H1 (cell line): ENCODE measurements at regions of chr6 and their contacts with region 1.

Region 1: DNA sequence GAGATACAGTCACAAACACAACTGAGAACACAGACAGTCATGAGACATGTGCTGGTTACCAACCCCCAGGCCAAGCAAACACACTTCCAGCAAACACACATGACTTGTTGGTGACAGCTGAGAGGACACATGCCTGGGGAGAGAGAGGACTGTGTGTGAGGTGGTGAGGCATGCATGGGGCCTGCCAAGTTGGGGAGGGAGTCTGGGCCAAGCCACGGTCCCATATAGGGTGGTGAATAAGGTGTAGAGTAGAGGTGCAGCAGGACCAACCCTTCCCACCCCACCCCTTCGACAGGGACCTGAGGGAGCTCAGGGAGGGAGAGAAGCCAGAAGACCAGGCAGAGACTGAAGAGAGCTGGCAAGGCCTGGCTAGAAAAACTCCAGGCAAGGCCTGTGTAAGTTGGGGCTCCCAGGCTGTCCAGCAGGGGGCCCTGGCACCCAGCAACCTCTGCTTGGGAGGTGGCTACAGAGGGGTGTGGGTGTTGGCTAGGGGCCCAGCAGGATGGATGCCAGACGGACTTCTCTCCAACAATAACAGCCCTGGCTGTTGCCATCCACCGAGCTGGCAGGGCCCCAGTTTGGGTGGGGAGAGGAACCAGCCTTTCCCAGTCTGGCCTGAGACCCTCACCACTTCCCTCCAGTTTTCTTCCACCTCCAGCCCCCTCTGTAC is 2.0 kb upstream of the SLC29A1 start:
- DNase-seq: peak in 1 of 2 experiments; percentile 74
- H3K4me3 ChIP-seq: no peak overlapping the region; a peak in 1 of 8 replicates
- H3K27ac ChIP-seq: no peak overlapping the region
- H3K4me1 ChIP-seq: peaks cover 33 to 61% (median 45%) of the 10 kb centered on the region in 4 experiments
- H3K27me3 ChIP-seq: no peaks in the 10 kb centered on the region
- CTCF ChIP-seq: peak in 2 of 3 experiments; percentile 67 to 71; a peak in 3 of 4 replicates
- EP300 ChIP-seq: no peak
- POLR2A ChIP-seq: no peak
- RAD21 ChIP-seq: peak; percentile 28 to 60

Region 2: DNA sequence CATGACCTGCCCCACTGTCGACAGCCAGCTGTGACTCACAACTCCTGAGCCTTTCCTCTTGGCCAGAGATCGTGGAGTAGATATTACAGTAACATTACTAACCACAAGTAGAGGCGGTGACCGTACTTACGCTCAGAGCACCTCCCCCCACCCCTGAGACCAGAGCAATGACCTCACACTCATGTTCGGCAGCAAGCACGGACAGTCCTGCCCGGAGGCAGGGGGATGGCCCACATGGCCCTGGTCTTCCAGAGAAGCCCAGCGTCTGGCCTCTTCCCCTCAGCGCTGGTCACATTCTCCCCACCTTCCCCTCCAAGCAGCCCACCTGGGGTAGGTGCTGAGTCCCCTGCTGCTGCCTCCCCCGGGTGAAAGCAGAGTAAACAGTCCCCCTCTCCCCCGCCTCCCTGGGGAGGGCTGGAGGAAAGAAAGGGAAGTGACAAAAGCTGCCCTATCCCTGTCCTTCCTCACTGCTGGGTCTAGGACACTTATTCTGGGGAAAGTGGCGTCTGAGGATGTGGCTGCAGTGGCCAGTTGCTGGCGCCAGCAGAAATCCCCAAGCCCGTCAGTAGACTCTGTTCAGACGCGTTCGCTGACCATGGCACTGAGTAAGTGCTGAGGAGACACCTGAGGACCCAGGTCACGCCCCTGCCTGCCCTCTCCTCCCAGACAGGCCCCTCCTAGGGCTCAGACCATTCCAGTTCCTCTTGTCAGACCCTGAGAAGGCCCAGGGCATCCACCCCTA is 162.6 kb before region 1 on chr6:
- CTCF ChIA-PET with region 1: no interaction called
- POLR2A ChIA-PET with region 1: no interaction called
- DNase-seq: no peak
- H3K4me3 ChIP-seq: no peak overlapping the region
- H3K27ac ChIP-seq: no peak overlapping the region
- H3K4me1 ChIP-seq: peaks cover 0 to 4% (median 0%) of the 10 kb centered on the region in 4 experiments; a peak in 4 of 7 replicates
- H3K27me3 ChIP-seq: no peaks in the 10 kb centered on the region
- CTCF ChIP-seq: no peak
- EP300 ChIP-seq: no peak
- POLR2A ChIP-seq: no peak
- RAD21 ChIP-seq: no peak

Region 3: GRCh38 chr6:44096612-44097011 is 124.8 kb before region 1 on chr6:
- CTCF ChIA-PET with region 1: interaction called, 22 read pairs
- POLR2A ChIA-PET with region 1: no interaction called
- DNase-seq: peak in 1 of 2 experiments; percentile 75
- H3K4me3 ChIP-seq: no peak overlapping the region
- H3K27ac ChIP-seq: no peak overlapping the region
- H3K4me1 ChIP-seq: no peaks in the 10 kb centered on the region
- H3K27me3 ChIP-seq: no peaks in the 10 kb centered on the region
- CTCF ChIP-seq: peak; percentile 87 to 97 (median 87)
- EP300 ChIP-seq: no peak
- POLR2A ChIP-seq: no peak
- RAD21 ChIP-seq: peak; percentile 89 to 90

Region 4: DNA sequence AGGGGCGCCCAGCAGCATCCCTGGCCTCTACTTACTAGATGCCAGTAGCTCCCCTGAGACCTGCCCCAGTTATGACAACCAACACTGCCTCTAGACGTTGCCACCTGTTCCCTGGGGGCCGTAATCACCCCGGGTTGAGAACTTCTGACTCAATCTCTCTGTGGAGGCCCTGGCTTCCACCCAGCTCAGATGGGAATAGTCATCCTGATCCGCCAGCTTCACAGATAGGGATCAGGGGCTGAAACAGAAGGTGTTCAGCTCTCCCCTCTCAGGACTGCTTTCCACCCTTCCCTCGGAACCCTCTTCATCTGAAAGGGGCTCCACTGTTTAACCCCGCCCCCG is 59.5 kb before region 1 on chr6:
- CTCF ChIA-PET with region 1: interaction called, 9 read pairs
- POLR2A ChIA-PET with region 1: interaction called, 17 read pairs
- DNase-seq: peak in 1 of 2 experiments; percentile 39
- H3K4me3 ChIP-seq: no peak overlapping the region
- H3K27ac ChIP-seq: no peak overlapping the region
- H3K4me1 ChIP-seq: peaks cover 0 to 18% (median 12%) of the 10 kb centered on the region in 4 experiments; a peak in 6 of 7 replicates
- H3K27me3 ChIP-seq: 0 out of 7 replicates have a peak, but pooled peaks cover 0 to 4% (median 0%) of the 10 kb centered on the region in 4 experiments
- CTCF ChIP-seq: no peak
- EP300 ChIP-seq: no peak
- POLR2A ChIP-seq: no peak
- RAD21 ChIP-seq: no peak

Region 5: GRCh38 chr6:44192428-44193041 is 28.9 kb before region 1 on chr6:
- CTCF ChIA-PET with region 1: interaction called, 11 read pairs
- POLR2A ChIA-PET with region 1: interaction called, 19 read pairs
- DNase-seq: no peak
- H3K4me3 ChIP-seq: no peak overlapping the region
- H3K27ac ChIP-seq: no peak overlapping the region
- H3K4me1 ChIP-seq: peaks cover 4 to 8% (median 4%) of the 10 kb centered on the region in 4 experiments; a peak in 6 of 7 replicates
- H3K27me3 ChIP-seq: no peaks in the 10 kb centered on the region; a peak in 1 of 7 replicates
- CTCF ChIP-seq: no peak
- EP300 ChIP-seq: no peak
- POLR2A ChIP-seq: no peak
- RAD21 ChIP-seq: no peak

Region 6: DNA sequence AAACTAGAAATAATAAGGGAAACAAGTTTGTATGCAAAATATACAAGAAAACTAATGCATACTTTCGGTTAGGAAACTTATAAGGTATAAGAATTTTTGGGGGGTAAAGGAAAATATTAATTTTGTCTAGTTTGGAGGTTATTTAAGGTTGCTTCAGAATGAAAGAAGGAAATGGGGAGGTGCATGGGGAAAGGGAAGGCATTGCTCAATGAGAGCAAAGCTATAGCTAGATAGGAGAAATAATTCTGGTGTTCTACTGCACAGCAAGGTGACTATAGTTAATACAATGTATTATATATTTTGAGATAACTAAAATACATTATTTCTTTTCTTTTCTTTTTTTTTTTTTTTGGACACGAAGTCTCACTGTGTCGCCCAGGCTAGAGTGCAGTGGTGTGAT is 10.1 kb before region 1 on chr6:
- CTCF ChIA-PET with region 1: interaction called, 25 read pairs
- POLR2A ChIA-PET with region 1: interaction called, 46 read pairs
- DNase-seq: no peak
- H3K4me3 ChIP-seq: no peak overlapping the region
- H3K27ac ChIP-seq: no peak overlapping the region
- H3K4me1 ChIP-seq: peaks cover 4 to 15% (median 8%) of the 10 kb centered on the region in 4 experiments
- H3K27me3 ChIP-seq: no peaks in the 10 kb centered on the region
- CTCF ChIP-seq: no peak
- EP300 ChIP-seq: no peak
- POLR2A ChIP-seq: no peak
- RAD21 ChIP-seq: no peak

Region 7: DNA sequence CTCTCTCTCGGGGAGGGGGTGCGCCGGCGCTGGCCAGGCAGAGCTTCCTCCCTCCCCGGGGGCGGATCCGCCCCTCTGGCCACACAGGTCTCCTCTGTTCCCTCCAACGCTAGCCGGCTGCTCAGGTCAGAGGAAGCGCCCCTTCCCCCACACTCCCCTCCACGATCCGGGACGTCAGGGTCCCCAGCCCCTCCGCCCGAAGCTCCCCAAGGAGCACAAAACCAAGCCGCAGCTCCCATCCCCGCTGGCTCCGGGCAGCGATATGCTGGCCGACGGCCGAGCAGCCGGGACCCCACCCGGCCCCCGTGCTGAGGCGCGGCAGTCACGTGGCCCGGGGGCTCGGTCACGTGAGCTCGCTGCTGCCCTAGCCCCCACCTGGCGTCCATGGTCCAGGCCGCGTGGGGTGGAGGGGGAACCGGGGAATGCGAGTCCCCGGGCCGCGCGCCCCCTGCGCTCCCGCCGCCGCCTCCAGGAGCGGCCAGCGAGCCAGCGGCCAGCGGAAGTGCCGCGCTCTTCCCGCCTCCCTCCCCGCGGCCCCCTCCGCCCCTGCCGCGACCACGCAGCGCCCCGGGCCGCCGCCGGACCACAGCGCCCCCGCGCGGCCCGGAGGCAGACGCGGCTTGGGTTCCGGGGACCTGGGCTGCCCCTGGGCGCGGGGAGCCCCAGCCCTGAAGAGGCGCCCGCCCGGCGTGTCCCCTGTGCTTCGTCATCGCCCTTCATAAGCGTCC is 35.8 kb after region 1 on chr6 and contains the start of gene SLC35B2:
- CTCF ChIA-PET with region 1: interaction called, 14 read pairs
- POLR2A ChIA-PET with region 1: interaction called, 42 read pairs
- DNase-seq: peak in 1 of 2 experiments; percentile 85
- H3K4me3 ChIP-seq: peak within 1 kb of the TSS; percentile 67 to 85 (median 75)
- H3K27ac ChIP-seq: peak within 1 kb of the TSS; percentile 88
- H3K4me1 ChIP-seq: peaks cover 1 to 20% (median 7%) of the 10 kb centered on the region in 4 experiments; a peak in 6 of 7 replicates
- H3K27me3 ChIP-seq: no peaks in the 10 kb centered on the region
- CTCF ChIP-seq: peak in 2 of 3 experiments; percentile 70 to 91; a peak in 3 of 4 replicates
- EP300 ChIP-seq: peak; percentile 21 to 23; a peak in 2 of 3 replicates
- POLR2A ChIP-seq: peak in 1 of 2 experiments; percentile 67; a peak in 1 of 3 replicates
- RAD21 ChIP-seq: peak; percentile 6 to 59; a peak in 3 of 4 replicates
- total RNA-seq, gene SLC35B2: 29.5 and 32.3 TPM in 2 replicates